Activated B cell treated with CpG ODN at 0.5 μM for 24 hours (primary cell): ENCODE measurements at regions of chr6 and their contacts with region 1.

Region 1: GRCh38 chr6:24646782-24647181 is 791 bp upstream of the KIAA0319 start:
- DNase-seq: no peak
- ATAC-seq: no peak
- H3K4me3 Mint-ChIP-seq: peak overlapping the region; percentile 89
- H3K27ac Mint-ChIP-seq: peak overlapping the region; percentile 91
- H3K4me1 Mint-ChIP-seq: peaks cover 28% of the 10 kb centered on the region
- H3K27me3 Mint-ChIP-seq: no peaks in the 10 kb centered on the region
- CTCF ChIP-seq: no peak

Region 2: GRCh38 chr6:24078200-24078599 is 568.6 kb before region 1 on chr6:
- CTCF ChIA-PET with region 1: no interaction called
- POLR2A ChIA-PET with region 1: no interaction called
- intact Hi-C with region 1: no loop called
- DNase-seq: no peak
- ATAC-seq: no peak
- H3K4me3 Mint-ChIP-seq: no peak overlapping the region
- H3K27ac Mint-ChIP-seq: no peak overlapping the region
- H3K4me1 Mint-ChIP-seq: no peaks in the 10 kb centered on the region
- H3K27me3 Mint-ChIP-seq: peaks cover 3% of the 10 kb centered on the region
- CTCF ChIP-seq: no peak

Region 3: DNA sequence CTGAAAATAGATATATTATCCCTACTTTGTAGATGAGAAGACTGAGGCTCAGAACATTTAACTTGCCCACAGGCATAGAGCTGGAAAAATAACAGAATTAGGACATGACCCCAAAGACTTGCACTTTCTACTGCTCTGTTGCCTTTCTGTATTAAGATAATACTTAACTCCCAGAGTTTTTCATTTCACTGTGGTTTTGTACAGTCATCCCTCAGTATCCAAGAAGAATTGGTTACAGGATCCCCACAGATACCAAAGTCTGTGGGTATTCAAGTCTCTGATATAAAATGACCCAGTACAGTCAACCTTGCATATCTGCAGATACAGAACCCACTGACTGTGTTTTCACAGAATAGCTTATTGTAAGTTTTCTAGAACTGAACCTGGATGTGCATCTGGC is 227.3 kb before region 1 on chr6:
- CTCF ChIA-PET with region 1: no interaction called
- POLR2A ChIA-PET with region 1: no interaction called
- intact Hi-C with region 1: no loop called
- DNase-seq: no peak
- ATAC-seq: no peak
- H3K4me3 Mint-ChIP-seq: no peak overlapping the region
- H3K27ac Mint-ChIP-seq: no peak overlapping the region
- H3K4me1 Mint-ChIP-seq: peaks cover 4% of the 10 kb centered on the region
- H3K27me3 Mint-ChIP-seq: no peaks in the 10 kb centered on the region
- CTCF ChIP-seq: no peak

Region 4: GRCh38 chr6:24520929-24521546 is 125.7 kb before region 1 on chr6:
- CTCF ChIA-PET with region 1: no interaction called
- POLR2A ChIA-PET with region 1: interaction called, 3 read pairs
- intact Hi-C with region 1: loop called (anchors 5 kb)
- DNase-seq: peak; percentile 35
- ATAC-seq: peak; percentile 40
- H3K4me3 Mint-ChIP-seq: peak overlapping the region; percentile 42
- H3K27ac Mint-ChIP-seq: peak overlapping the region; percentile 88
- H3K4me1 Mint-ChIP-seq: peaks cover 62% of the 10 kb centered on the region
- H3K27me3 Mint-ChIP-seq: no peaks in the 10 kb centered on the region
- CTCF ChIP-seq: no peak

Region 5: GRCh38 chr6:24630856-24631505 is 15.8 kb before region 1 on chr6:
- CTCF ChIA-PET with region 1: no interaction called
- POLR2A ChIA-PET with region 1: no interaction called
- intact Hi-C with region 1: no loop called
- DNase-seq: no peak
- ATAC-seq: no peak
- H3K4me3 Mint-ChIP-seq: no peak overlapping the region
- H3K27ac Mint-ChIP-seq: no peak overlapping the region
- H3K4me1 Mint-ChIP-seq: no peaks in the 10 kb centered on the region
- H3K27me3 Mint-ChIP-seq: peaks cover 14% of the 10 kb centered on the region
- CTCF ChIP-seq: no peak

Region 6: GRCh38 chr6:24666641-24667377 is 20.0 kb after region 1 on chr6 and contains the starts of genes ACOT13 and TDP2:
- CTCF ChIA-PET with region 1: no interaction called
- POLR2A ChIA-PET with region 1: interaction called, 25 read pairs
- intact Hi-C with region 1: loop called (anchors 1 kb)
- DNase-seq: peak; percentile 92
- ATAC-seq: peak; percentile 94
- H3K4me3 Mint-ChIP-seq: peak within 1 kb of the TSS; percentile 99
- H3K27ac Mint-ChIP-seq: peak within 1 kb of the TSS; percentile 96
- H3K4me1 Mint-ChIP-seq: peaks cover 46% of the 10 kb centered on the region
- H3K27me3 Mint-ChIP-seq: no peaks in the 10 kb centered on the region
- CTCF ChIP-seq: no peak
- total RNA-seq, gene ACOT13: 12.0 and 13.8 TPM in 2 replicates
- total RNA-seq, gene TDP2: 48.9 and 51.1 TPM in 2 replicates

Region 7: GRCh38 chr6:24774696-24775519 is 128.1 kb after region 1 on chr6 and contains the start of gene GMNN:
- CTCF ChIA-PET with region 1: no interaction called
- POLR2A ChIA-PET with region 1: interaction called, 3 read pairs
- intact Hi-C with region 1: loop called (anchors 2 kb)
- DNase-seq: peak; percentile 99
- ATAC-seq: peak; percentile 90
- H3K4me3 Mint-ChIP-seq: peak within 1 kb of the TSS; percentile 97
- H3K27ac Mint-ChIP-seq: peak within 1 kb of the TSS; percentile 92
- H3K4me1 Mint-ChIP-seq: peaks cover 22% of the 10 kb centered on the region
- H3K27me3 Mint-ChIP-seq: no peaks in the 10 kb centered on the region
- CTCF ChIP-seq: no peak
- total RNA-seq, gene GMNN: 12.9 and 14.5 TPM in 2 replicates